Activated CD4-positive, alpha-beta memory T cell treated with anti-CD3 and anti-CD28 coated beads, Interleukin-2, amount 10 ng/mL, durations not matched to agents 7 days and 5 days (primary cell): ENCODE measurements at regions of chr6 and their contacts with region 1.

Region 1: DNA sequence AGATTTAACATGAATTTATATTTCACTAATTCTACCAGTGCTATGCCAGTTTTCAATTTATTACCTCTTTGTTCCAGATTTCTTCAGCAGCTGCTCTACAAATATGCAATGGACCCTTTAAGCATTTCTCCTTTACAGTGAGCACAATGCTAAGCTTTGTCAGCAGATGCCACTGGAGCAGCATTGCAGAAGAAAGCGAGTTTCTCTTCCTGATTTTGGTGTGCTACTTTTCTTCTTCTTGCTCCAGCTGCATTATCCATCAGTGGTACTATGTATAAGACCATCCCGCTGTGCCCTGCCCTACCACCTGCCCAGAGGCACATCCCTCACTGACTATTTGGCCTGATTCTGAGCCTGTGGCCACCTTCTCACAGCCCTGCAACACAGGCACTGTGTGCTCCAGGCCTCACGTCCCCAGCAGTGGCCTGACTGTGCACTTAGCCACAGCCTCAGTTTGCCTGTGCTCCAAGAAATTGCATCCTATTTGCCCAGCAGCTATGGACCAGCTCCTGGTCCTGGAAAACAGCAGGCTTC is 84.1 kb downstream of the TNFAIP3 start:
- DNase-seq: no peak
- H3K4me3 Mint-ChIP-seq: no peak overlapping the region
- H3K27ac Mint-ChIP-seq: no peak overlapping the region
- H3K4me1 Mint-ChIP-seq: peaks cover 17% of the 10 kb centered on the region
- H3K27me3 Mint-ChIP-seq: peaks cover 3% of the 10 kb centered on the region

Region 2: GRCh38 chr6:137736048-137736818 is 214.9 kb before region 1 on chr6:
- CTCF ChIA-PET with region 1: no interaction called
- POLR2A ChIA-PET with region 1: no interaction called
- DNase-seq: peak; percentile 28
- H3K4me3 Mint-ChIP-seq: no peak overlapping the region
- H3K27ac Mint-ChIP-seq: peak overlapping the region; percentile 48
- H3K4me1 Mint-ChIP-seq: peaks cover 18% of the 10 kb centered on the region
- H3K27me3 Mint-ChIP-seq: peaks cover 2% of the 10 kb centered on the region

Region 3: DNA sequence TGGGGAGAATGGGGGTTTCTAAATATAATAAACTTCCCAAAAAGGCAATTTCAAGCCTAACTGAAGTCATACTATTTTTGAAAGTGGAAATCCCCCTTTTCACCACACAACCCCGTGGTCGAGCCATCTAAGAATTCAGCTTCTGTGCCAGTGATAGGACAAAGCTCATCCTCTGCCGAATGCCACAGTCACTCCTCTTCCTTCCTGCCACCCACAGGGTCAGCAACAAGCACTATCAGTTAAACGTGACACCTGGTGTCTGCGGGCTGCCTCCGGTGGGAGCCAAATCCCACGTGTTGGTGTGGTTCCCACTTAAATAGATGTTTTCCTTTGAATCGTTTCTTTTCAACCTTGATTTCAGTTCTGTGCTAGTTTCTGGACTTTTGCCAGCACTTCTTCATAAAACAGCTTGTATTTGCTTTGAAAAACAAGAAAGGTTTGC is 23.3 kb before region 1 on chr6:
- CTCF ChIA-PET with region 1: no interaction called
- POLR2A ChIA-PET with region 1: no interaction called
- DNase-seq: peak; percentile 80
- H3K4me3 Mint-ChIP-seq: peak overlapping the region; percentile 2
- H3K27ac Mint-ChIP-seq: peak overlapping the region; percentile 67
- H3K4me1 Mint-ChIP-seq: peaks cover 33% of the 10 kb centered on the region
- H3K27me3 Mint-ChIP-seq: no peaks in the 10 kb centered on the region

Region 4: DNA sequence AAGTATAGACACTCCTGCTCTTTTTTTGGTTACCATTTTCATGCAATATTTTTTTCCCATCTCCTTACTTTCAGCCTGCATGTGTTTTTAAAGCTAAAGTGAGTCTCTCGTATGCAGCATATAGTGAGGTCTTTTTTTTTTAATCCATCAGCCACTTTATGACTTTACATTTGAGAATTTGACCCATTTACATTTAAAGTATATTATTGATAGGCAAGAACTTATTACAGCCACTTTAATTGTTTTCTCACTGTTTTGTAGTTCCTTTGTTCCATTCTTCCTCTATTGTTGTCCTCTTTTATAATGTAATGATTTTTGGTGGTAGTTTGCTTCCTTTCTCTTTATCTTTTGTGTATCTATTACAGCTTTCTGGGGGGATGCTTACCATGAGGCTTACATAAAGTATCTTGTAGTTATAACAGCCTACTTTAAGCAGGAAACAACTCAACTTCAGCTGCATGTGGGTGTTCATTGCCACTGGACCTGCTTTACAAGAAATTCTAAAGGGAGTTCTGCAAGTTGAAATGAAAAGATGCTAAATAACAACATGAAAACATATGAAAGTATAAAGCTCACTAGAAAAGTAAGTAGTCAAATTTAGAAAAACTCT is 12.3 kb before region 1 on chr6:
- CTCF ChIA-PET with region 1: interaction called, 16 read pairs
- POLR2A ChIA-PET with region 1: interaction called, 4 read pairs
- DNase-seq: no peak
- H3K4me3 Mint-ChIP-seq: no peak overlapping the region
- H3K27ac Mint-ChIP-seq: peak overlapping the region; percentile 3
- H3K4me1 Mint-ChIP-seq: peaks cover 21% of the 10 kb centered on the region
- H3K27me3 Mint-ChIP-seq: no peaks in the 10 kb centered on the region

Region 5: GRCh38 chr6:137975188-137975940 is 24.2 kb after region 1 on chr6:
- CTCF ChIA-PET with region 1: interaction called, 18 read pairs
- POLR2A ChIA-PET with region 1: interaction called, 3 read pairs
- DNase-seq: peak; percentile 35
- H3K4me3 Mint-ChIP-seq: peak overlapping the region; percentile 66
- H3K27ac Mint-ChIP-seq: peak overlapping the region; percentile 91
- H3K4me1 Mint-ChIP-seq: peaks cover 53% of the 10 kb centered on the region
- H3K27me3 Mint-ChIP-seq: no peaks in the 10 kb centered on the region

Region 6: GRCh38 chr6:137989664-137990063 is 38.5 kb after region 1 on chr6:
- CTCF ChIA-PET with region 1: no interaction called
- POLR2A ChIA-PET with region 1: no interaction called
- DNase-seq: no peak
- H3K4me3 Mint-ChIP-seq: no peak overlapping the region
- H3K27ac Mint-ChIP-seq: no peak overlapping the region
- H3K4me1 Mint-ChIP-seq: no peaks in the 10 kb centered on the region
- H3K27me3 Mint-ChIP-seq: peaks cover 30% of the 10 kb centered on the region